ENCODE measurements at regions of chr15 and their contacts with region 1.

Region 1: DNA sequence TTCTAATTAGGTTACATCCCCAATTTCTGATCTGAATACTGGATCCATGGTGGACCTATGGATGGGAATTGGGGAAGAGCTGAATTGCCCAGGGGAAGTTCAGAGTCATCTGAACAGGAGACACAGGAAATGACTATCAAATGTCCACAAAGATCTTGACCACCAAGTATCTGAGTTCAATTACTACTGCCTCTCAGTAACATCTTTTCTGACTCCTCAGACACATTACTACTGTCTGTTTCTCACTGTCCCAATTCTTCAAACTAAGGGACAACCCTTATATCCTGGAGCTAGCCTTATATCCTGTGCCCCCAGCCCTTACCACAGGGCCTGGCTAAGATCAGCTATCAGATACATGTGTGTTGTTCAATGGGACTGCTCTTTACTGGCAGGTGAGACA is 10.1 kb upstream of the IREB2 start:
- DNase-seq: no peak
- H3K4me3 ChIP-seq: no peak overlapping the region
- H3K27ac ChIP-seq: no peak overlapping the region
- H3K27me3 ChIP-seq: peaks cover 23% of the 10 kb centered on the region
- CTCF ChIP-seq: no peak

Region 2: DNA sequence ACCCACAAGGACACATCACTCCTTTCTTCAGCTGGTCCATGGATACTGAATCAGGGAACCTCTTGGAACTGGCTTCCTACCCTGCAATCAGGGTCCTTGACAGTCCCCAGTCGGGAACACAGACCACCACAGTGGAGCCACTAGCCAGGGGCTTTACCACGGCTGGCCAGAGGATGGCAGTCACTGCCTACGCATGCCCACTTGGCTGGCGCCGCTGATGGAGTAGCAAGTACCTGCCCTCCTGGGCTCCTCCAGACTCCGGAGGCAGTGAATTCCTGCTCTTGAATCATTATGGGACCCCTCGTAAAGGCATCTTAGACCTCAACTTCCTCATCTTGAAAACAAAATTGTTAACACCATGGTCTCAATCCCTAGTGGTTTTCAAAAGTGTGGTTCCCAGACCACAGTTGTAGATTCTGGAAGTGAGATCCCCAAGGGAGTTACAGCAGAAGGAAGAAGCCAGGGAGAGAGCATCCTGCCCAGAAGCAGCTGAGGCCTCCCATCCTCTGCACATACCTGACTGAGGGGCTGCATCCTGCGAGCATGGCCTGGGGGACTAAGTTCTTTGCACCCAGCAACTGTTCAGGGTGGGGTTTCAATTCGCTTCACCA is 119.4 kb before region 1 on chr15:
- CTCF ChIA-PET with region 1: interaction called, 112 read pairs
- POLR2A ChIA-PET with region 1: no interaction called
- DNase-seq: peak; percentile 33
- H3K4me3 ChIP-seq: no peak overlapping the region
- H3K27ac ChIP-seq: no peak overlapping the region
- H3K27me3 ChIP-seq: peaks cover 7% of the 10 kb centered on the region
- CTCF ChIP-seq: peak; percentile 95

Region 3: GRCh38 chr15:78565097-78565951 is 137.4 kb after region 1 on chr15 and contains the start of gene CHRNA5:
- CTCF ChIA-PET with region 1: no interaction called
- POLR2A ChIA-PET with region 1: no interaction called
- DNase-seq: peak; percentile 21
- H3K4me3 ChIP-seq: peak within 1 kb of the TSS; percentile 76
- H3K27ac ChIP-seq: peak within 1 kb of the TSS; percentile 39
- H3K27me3 ChIP-seq: peaks cover 2% of the 10 kb centered on the region
- CTCF ChIP-seq: no peak
- polyA plus RNA-seq, gene CHRNA5: 4.3 and 5.2 TPM in 2 replicates

Measured in AG04450 (cell line).